Right cardiac atrium (tissue), 5 donors: ENCODE measurements at regions of chr7 and their contacts with region 1.

Region 1: GRCh38 chr7:19665399-19666008 is 43.3 kb downstream of the POLR1F start:
- DNase-seq: no peak
- ATAC-seq: no peak
- H3K4me3 ChIP-seq: no peak overlapping the region
- H3K27ac ChIP-seq: no peak overlapping the region
- H3K4me1 ChIP-seq: no peaks in the 10 kb centered on the region
- H3K27me3 ChIP-seq: no peaks in the 10 kb centered on the region

Region 2: DNA sequence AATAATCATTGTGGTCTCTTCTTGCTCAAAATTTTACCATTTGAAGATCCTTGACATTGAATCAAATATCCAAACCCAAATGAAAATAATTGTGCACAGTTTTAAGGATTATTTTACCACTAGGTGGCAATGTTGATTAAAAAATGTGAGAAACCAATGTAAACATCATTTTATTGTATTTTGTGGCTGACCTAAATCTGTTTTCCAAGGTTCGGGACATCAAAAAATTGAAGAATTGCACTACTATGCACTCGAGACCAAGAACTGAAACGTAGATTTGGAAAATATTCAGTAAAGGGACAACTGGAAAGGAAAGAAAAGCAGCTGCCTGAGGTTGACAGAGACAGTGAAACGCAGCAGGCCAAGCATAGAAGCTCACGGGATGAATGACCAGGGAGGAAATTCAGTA is 1984.6 kb before region 1 on chr7:
- intact Hi-C with region 1: loop called in 1 of 4 experiments (anchors 10 kb)
- DNase-seq: peak in 1 of 3 donors; percentile 19
- ATAC-seq: peak; percentile 30 to 36
- H3K4me3 ChIP-seq: no peak overlapping the region
- H3K27ac ChIP-seq: no peak overlapping the region
- H3K4me1 ChIP-seq: peaks cover 2% of the 10 kb centered on the region
- H3K27me3 ChIP-seq: no peaks in the 10 kb centered on the region

Region 3: DNA sequence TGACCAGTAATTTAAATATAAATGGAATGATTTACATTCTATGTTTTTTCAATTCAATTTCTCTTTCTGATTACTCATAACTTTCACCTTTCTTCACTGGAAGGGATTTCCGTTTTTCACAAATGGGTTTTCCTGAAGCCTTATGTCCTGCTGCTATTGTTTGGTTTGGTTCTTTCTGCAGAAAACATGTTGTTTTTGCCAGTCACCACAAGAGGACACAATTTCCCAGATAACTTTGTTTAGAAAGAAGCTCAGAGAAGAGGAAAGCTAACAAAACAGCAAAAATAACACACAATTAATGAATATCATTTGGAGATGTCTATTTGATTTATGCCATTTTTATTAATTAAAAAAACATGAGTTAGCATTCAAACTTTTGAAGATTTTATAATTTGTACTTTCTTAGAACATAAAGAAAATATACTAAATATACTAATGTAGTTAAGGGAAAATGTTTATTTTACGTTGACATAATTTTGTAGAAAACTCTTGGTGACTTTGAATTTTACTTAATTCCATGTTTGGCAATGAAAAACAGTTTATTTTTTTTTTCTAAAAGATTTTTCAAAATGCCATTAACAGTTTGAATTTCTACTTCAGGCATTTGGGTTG is 543.4 kb before region 1 on chr7:
- intact Hi-C with region 1: loop called in 1 of 4 experiments (anchors 10 kb)
- DNase-seq: no peak
- ATAC-seq: no peak
- H3K4me3 ChIP-seq: no peak overlapping the region
- H3K27ac ChIP-seq: no peak overlapping the region
- H3K4me1 ChIP-seq: no peaks in the 10 kb centered on the region
- H3K27me3 ChIP-seq: no peaks in the 10 kb centered on the region

Region 4: GRCh38 chr7:19692111-19692828 is 26.8 kb after region 1 on chr7:
- intact Hi-C with region 1: no loop called
- DNase-seq: peak in 1 of 3 donors; percentile 52
- ATAC-seq: peak in 1 of 2 donors; percentile 21
- H3K4me3 ChIP-seq: no peak overlapping the region
- H3K27ac ChIP-seq: no peak overlapping the region
- H3K4me1 ChIP-seq: no peaks in the 10 kb centered on the region
- H3K27me3 ChIP-seq: no peaks in the 10 kb centered on the region

Region 5: DNA sequence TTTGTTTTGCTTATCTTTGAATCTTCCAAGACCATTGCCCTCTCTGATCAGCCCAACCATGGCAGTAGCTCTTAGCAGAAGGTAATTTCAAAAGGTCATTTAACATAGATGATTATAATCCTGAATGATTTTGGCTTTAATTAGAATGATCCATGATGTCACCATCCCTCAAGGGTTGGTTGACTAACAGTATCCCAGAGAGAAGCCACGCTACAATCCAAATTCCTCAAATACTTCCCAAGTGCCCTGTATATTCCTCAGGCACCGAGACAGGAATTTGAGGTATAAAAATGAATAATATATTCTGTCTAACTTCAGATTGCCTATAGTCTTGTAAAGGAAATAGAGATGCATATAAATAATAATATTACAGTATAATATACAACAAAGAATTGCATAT is 150.0 kb after region 1 on chr7:
- intact Hi-C with region 1: no loop called
- DNase-seq: no peak
- ATAC-seq: no peak
- H3K4me3 ChIP-seq: no peak overlapping the region
- H3K27ac ChIP-seq: no peak overlapping the region
- H3K4me1 ChIP-seq: no peaks in the 10 kb centered on the region
- H3K27me3 ChIP-seq: no peaks in the 10 kb centered on the region